Activated naive CD4-positive, alpha-beta T cell treated with anti-CD3 and anti-CD28 coated beads for 36 hours (primary cell): ENCODE measurements at regions of chr15 and their contacts with region 1.

Region 1: DNA sequence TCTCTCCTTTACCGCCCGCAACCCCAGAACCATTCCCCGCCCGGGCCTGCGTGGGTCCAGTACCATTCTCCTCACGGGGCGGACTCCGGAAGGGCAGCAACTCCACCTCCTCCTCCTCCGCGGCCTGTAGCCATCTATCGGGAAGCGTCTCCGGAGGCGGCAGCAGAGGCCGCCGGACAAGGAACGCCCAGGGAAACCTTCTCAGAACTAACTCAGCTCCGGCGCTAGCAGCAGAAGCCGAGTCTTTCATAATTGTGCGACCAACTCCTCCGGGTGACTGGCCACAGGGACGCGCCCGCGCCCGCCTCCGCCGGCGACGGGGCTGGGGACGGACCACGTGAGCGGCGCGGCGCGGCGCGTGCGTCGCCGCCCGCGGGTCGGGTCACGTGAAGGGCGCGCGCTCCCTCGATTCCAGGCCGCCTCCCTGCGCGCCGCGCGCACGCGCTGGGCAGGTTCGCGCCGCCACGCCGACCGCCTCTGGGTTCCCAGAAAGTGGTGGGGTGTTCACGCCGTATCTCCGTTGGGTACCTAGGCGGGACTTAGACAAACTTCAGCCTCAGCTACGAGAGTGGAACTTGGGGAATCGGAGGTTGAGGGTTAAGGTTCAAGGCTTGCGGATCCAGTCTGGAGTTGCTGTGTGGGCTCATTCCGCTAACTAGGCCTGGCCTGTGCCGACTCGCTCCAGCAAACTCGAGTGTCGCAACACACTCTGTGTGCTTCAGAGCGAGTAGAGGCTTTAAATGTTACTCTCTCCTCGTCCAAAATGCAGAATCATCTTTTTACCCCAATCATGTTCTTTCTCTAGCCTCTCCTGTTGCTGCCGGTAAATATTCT is at the start of gene TRPM7:
- DNase-seq: peak; percentile 87
- H3K4me3 Mint-ChIP-seq: peak within 1 kb of the TSS; percentile 99
- H3K27ac Mint-ChIP-seq: peak within 1 kb of the TSS; percentile 98
- H3K4me1 Mint-ChIP-seq: peaks cover 52% of the 10 kb centered on the region
- H3K27me3 Mint-ChIP-seq: no peaks in the 10 kb centered on the region
- total RNA-seq, gene TRPM7: 31.1 to 32.7 TPM

Region 2: GRCh38 chr15:49620658-49621368 is 1065.9 kb before region 1 on chr15 and contains the starts of genes DTWD1 and FAM227B:
- CTCF ChIA-PET with region 1: no interaction called
- intact Hi-C with region 1: loop called (anchors 5 kb)
- DNase-seq: peak; percentile 96
- H3K4me3 Mint-ChIP-seq: peak within 1 kb of the TSS; percentile 88
- H3K27ac Mint-ChIP-seq: peak within 1 kb of the TSS; percentile 91
- H3K4me1 Mint-ChIP-seq: peaks cover 33% of the 10 kb centered on the region
- H3K27me3 Mint-ChIP-seq: no peaks in the 10 kb centered on the region
- total RNA-seq, gene DTWD1: 18.5 to 19.4 TPM
- total RNA-seq, gene FAM227B: 2.0 to 2.8 TPM

Region 3: GRCh38 chr15:50424066-50424890 is 262.4 kb before region 1 on chr15 and contains the start of gene USP8:
- CTCF ChIA-PET with region 1: no interaction called
- intact Hi-C with region 1: loop called (anchors 1 kb)
- DNase-seq: peak; percentile 96
- H3K4me3 Mint-ChIP-seq: peak within 1 kb of the TSS; percentile 94
- H3K27ac Mint-ChIP-seq: peak within 1 kb of the TSS; percentile 92
- H3K4me1 Mint-ChIP-seq: peaks cover 30% of the 10 kb centered on the region
- H3K27me3 Mint-ChIP-seq: no peaks in the 10 kb centered on the region
- total RNA-seq, gene USP8: 31.6 TPM

Region 4: GRCh38 chr15:50653156-50653745 is 33.4 kb before region 1 on chr15:
- CTCF ChIA-PET with region 1: no interaction called
- intact Hi-C with region 1: loop called (anchors 2 kb)
- DNase-seq: no peak
- H3K4me3 Mint-ChIP-seq: no peak overlapping the region
- H3K27ac Mint-ChIP-seq: peak overlapping the region; percentile 47
- H3K4me1 Mint-ChIP-seq: peaks cover 19% of the 10 kb centered on the region
- H3K27me3 Mint-ChIP-seq: no peaks in the 10 kb centered on the region

Region 5: GRCh38 chr15:50765195-50765973 is 78.7 kb after region 1 on chr15 and contains the start of gene SPPL2A:
- CTCF ChIA-PET with region 1: no interaction called
- intact Hi-C with region 1: loop called (anchors 1 kb)
- DNase-seq: peak; percentile 93
- H3K4me3 Mint-ChIP-seq: peak within 1 kb of the TSS; percentile 90
- H3K27ac Mint-ChIP-seq: peak within 1 kb of the TSS; percentile 99
- H3K4me1 Mint-ChIP-seq: peaks cover 55% of the 10 kb centered on the region
- H3K27me3 Mint-ChIP-seq: no peaks in the 10 kb centered on the region
- total RNA-seq, gene SPPL2A: 37.7 to 41.6 TPM

Region 6: GRCh38 chr15:51077221-51078153 is 390.8 kb after region 1 on chr15:
- CTCF ChIA-PET with region 1: no interaction called
- intact Hi-C with region 1: loop called (anchors 10 kb)
- DNase-seq: peak; percentile 91
- H3K4me3 Mint-ChIP-seq: peak overlapping the region; percentile 68
- H3K27ac Mint-ChIP-seq: peak overlapping the region; percentile 85
- H3K4me1 Mint-ChIP-seq: peaks cover 24% of the 10 kb centered on the region
- H3K27me3 Mint-ChIP-seq: peaks cover 8% of the 10 kb centered on the region

Region 7: DNA sequence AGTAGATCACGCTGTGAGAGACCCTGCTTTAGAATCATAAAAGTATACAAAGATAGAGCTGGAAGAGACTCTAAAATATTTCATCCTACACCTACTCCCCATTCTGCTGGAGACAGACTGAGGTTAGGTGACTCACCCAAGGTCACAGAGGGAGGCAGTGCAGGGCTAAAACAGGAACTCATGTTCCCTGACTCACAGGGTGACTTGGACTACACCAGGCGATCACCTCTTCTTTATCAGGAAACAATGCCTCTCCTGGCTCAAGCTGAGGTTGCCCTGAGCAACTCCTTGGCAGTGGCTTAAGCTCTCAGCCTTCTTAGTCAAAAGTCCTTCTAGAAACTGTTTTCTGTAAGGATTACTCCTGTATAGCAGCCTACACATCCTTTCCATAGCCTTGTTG is 434.4 kb after region 1 on chr15:
- CTCF ChIA-PET with region 1: no interaction called
- intact Hi-C with region 1: no loop called
- DNase-seq: peak; percentile 26
- H3K4me3 Mint-ChIP-seq: no peak overlapping the region
- H3K27ac Mint-ChIP-seq: no peak overlapping the region
- H3K4me1 Mint-ChIP-seq: no peaks in the 10 kb centered on the region
- H3K27me3 Mint-ChIP-seq: peaks cover 7% of the 10 kb centered on the region